Natural killer cell (primary cell): ENCODE measurements at regions of chr7 and their contacts with region 1.

Region 1: DNA sequence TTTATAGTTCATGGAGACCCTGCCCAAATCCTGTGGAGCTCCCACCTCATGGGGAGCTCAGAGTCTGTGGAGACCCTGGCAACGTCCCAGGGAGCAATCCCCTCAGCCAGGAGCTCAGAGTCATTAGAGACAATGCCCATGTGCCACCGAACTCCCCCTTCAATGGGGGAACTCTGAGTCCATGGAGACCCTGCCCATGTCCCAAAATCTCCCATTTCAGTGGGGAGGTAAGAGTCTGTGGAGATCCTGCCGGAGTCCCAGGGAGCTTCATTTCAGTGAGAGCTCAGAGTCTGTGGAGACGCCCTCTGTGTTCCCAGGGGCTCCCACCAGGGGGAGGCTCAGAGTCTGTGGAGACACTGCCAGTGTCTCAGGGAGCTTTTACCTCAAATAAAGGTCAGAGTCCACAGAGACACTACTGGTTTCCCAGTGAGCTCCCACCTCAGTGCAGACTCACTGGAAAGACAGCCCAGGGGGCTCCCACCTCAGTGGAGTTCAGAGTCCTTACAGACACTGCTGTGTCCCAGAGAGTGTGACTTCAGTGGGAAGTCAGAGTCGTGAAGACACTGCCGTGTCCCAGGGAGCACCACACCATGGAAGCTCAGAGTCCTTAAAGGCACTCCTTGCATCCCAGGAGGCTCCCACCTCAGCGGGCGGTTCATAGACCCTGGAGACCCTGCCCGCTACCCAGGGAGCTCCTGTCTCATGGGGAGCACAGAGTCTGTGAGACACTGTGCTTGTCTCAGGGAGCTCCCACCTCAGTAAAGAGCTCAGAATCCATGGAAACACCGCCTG is 5.0 kb downstream of the MYO1G start:
- DNase-seq: peak; percentile 51 to 76
- ATAC-seq: peak; percentile 28 to 45 (median 38)
- H3K4me3 ChIP-seq: no peak overlapping the region
- H3K4me3 Mint-ChIP-seq: peak overlapping the region; percentile 13
- H3K27ac ChIP-seq: no peak overlapping the region
- H3K27ac Mint-ChIP-seq: peak overlapping the region; percentile 50 to 99
- H3K4me1 ChIP-seq: peaks cover 57% of the 10 kb centered on the region
- H3K4me1 Mint-ChIP-seq: peaks cover 34 to 53% of the 10 kb centered on the region in 2 donors
- H3K27me3 ChIP-seq: no peaks in the 10 kb centered on the region
- H3K27me3 Mint-ChIP-seq: no peaks in the 10 kb centered on the region
- CTCF ChIP-seq: peak; percentile 58

Region 2: GRCh38 chr7:44633254-44634186 is 340.3 kb before region 1 on chr7:
- intact Hi-C with region 1: loop called (anchors 5 kb)
- DNase-seq: peak in 1 of 2 donors; percentile 87
- ATAC-seq: peak; percentile 19 to 57 (median 43)
- H3K4me3 ChIP-seq: no peak overlapping the region
- H3K4me3 Mint-ChIP-seq: peak overlapping the region; percentile 31
- H3K27ac ChIP-seq: peak overlapping the region; percentile 86
- H3K27ac Mint-ChIP-seq: peak overlapping the region; percentile 72 to 94
- H3K4me1 ChIP-seq: peaks cover 99% of the 10 kb centered on the region
- H3K4me1 Mint-ChIP-seq: peaks cover 77 to 78% of the 10 kb centered on the region in 2 donors
- H3K27me3 ChIP-seq: no peaks in the 10 kb centered on the region
- H3K27me3 Mint-ChIP-seq: no peaks in the 10 kb centered on the region
- CTCF ChIP-seq: no peak

Region 3: GRCh38 chr7:44986218-44987053 is 12.6 kb after region 1 on chr7:
- intact Hi-C with region 1: loop called (anchors 1 kb)
- DNase-seq: peak; percentile 96 to 99
- ATAC-seq: peak; percentile 91 to 98 (median 95)
- H3K4me3 ChIP-seq: peak overlapping the region; percentile 61
- H3K4me3 Mint-ChIP-seq: peak overlapping the region; percentile 96
- H3K27ac ChIP-seq: peak overlapping the region; percentile 84
- H3K27ac Mint-ChIP-seq: peak overlapping the region; percentile 99 to 100
- H3K4me1 ChIP-seq: peaks cover 40% of the 10 kb centered on the region
- H3K4me1 Mint-ChIP-seq: peaks cover 37 to 39% of the 10 kb centered on the region in 2 donors
- H3K27me3 ChIP-seq: no peaks in the 10 kb centered on the region
- H3K27me3 Mint-ChIP-seq: no peaks in the 10 kb centered on the region
- CTCF ChIP-seq: no peak

Region 4: DNA sequence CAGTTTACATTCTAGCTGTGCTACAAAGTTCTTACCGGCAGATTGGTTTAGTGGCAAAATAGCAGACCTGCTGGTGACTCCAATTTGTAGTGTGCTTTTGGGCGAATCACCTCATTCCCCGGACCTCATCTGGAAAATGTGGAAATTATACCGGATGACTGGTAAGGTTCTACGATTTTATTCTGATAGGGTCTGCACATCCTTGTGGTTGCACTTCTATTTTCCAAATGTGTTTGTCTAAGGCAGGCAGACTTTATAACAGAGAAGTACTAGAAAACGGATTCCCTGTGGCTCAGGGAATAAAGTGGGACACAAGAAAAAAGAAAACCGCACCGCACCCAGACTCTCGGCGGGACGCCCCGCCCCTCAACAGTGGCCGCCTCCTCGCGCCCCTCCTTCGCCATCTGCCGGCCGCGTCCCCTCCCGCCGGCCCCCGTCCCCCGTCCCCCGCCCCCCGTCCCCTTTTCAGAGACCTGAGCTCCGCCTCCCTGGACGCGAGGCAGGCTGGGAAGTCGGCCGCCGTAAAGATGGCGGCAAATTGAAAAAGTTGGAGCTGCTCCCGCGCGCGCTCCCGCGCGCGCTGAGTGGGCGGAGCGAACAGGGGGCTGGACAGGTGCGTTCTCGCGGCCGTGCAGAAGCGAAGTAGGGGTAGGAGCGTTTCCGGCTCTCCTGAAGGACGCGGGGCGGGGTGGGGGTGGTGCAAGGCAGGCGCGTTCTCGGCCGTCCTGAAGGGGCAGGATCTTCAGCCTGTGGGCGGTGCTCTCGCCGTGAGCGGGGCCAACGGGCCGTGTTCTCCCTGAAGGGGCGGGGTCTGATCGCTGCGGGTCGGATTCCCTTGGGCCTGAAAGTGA is 25.7 kb after region 1 on chr7:
- intact Hi-C with region 1: loop called (anchors 2 kb)
- DNase-seq: peak; percentile 90 to 99
- ATAC-seq: peak; percentile 88 to 96 (median 89)
- H3K4me3 ChIP-seq: peak overlapping the region; percentile 54
- H3K4me3 Mint-ChIP-seq: peak overlapping the region; percentile 98
- H3K27ac ChIP-seq: peak overlapping the region; percentile 63
- H3K27ac Mint-ChIP-seq: peak overlapping the region; percentile 91 to 95
- H3K4me1 ChIP-seq: peaks cover 16% of the 10 kb centered on the region
- H3K4me1 Mint-ChIP-seq: peaks cover 27 to 38% of the 10 kb centered on the region in 2 donors
- H3K27me3 ChIP-seq: no peaks in the 10 kb centered on the region
- H3K27me3 Mint-ChIP-seq: no peaks in the 10 kb centered on the region
- CTCF ChIP-seq: no peak